Heart right ventricle (tissue), 16 donors: ENCODE measurements at regions of chr4 and their contacts with region 1.

Region 1: DNA sequence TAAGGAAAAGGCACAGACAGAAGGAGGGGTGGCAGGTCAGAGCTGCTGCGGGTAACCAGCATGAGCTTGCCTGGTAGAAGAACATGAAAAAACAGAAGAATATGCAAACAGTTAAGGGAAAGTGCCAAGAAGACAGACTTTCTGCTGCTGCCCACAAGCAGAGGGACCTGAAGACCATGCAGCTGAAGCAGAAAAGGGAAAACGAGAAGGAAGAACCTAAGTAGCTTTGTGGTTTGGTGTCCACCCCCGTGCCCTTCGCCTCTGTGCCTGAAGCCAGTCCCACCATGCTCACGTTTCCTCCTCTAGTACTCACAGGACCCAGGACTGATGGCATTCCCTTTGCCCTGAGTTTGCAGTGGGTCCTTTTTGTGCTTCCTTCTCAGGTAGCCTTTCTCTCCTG is 62.8 kb downstream of the UBA6 start:
- DNase-seq: no peak
- ATAC-seq: no peak
- H3K4me3 ChIP-seq: no peak overlapping the region
- H3K27ac ChIP-seq: no peak overlapping the region
- H3K4me1 ChIP-seq: no peaks in the 10 kb centered on the region
- H3K27me3 ChIP-seq: no peaks in the 10 kb centered on the region
- CTCF ChIP-seq: no peak

Region 2: GRCh38 chr4:67963356-67963755 is 325.2 kb after region 1 on chr4 and contains the start of gene TMPRSS11A:
- intact Hi-C with region 1: no loop called
- DNase-seq: no peak
- ATAC-seq: no peak
- H3K4me3 ChIP-seq: no peak within 1 kb of the TSS
- H3K27ac ChIP-seq: no peak within 1 kb of the TSS
- H3K4me1 ChIP-seq: no peaks in the 10 kb centered on the region
- H3K27me3 ChIP-seq: no peaks in the 10 kb centered on the region
- CTCF ChIP-seq: no peak
- total RNA-seq, gene TMPRSS11A: not detected

Region 3: GRCh38 chr4:68062501-68062900 is 424.4 kb after region 1 on chr4:
- intact Hi-C with region 1: loop called in 1 of 10 experiments (anchors 5 kb)
- DNase-seq: no peak
- ATAC-seq: no peak
- H3K4me3 ChIP-seq: no peak overlapping the region
- H3K27ac ChIP-seq: no peak overlapping the region
- H3K4me1 ChIP-seq: no peaks in the 10 kb centered on the region
- H3K27me3 ChIP-seq: no peaks in the 10 kb centered on the region
- CTCF ChIP-seq: no peak